SK-N-SH (cell line): ENCODE measurements at regions of chr12 and their contacts with region 1.

Region 1: DNA sequence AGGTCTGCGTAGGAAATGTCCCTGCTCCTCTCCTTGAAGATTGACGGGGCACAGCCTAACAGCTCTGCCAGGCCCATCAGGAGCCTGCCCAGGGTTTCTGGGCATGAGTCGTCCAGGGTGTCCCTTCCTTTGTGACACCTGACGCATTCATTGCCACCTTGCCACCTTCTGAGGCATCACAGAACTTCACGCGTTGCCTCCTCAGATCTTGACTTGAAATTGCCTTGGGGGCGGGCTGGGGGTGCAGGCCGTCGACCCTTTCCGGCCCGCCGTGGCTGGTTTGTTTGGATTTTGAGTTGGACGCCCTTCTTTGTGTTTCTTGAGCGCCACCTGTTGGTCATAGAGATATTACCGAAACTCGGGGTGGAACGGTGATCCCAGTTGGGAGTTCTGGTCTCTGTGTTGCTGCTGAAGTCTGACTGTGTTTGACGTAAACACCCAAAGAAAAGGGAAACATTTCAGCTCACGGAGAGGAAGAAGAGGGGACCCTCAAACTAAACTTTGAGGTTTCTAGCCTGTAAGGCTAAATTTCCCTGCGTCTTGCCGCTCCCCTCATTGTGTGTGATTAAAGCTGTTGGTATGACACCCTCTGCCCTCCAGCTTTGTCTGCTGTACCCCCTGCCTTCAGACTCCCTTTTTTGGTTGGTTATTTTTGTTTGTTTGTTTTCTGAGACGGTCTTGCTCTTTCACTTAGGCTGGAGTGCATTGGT is 44.6 kb downstream of the MLXIP start:
- DNase-seq: peak; percentile 86
- H3K4me3 ChIP-seq: no peak overlapping the region
- H3K27ac ChIP-seq: peak overlapping the region in 1 of 2 experiments; percentile 32; a peak in 1 of 4 replicates
- H3K4me1 ChIP-seq: peaks cover 2 to 4% of the 10 kb centered on the region in 2 experiments; a peak in 2 of 4 replicates
- H3K27me3 ChIP-seq: no peaks in the 10 kb centered on the region
- CTCF ChIP-seq: peak; percentile 78
- EP300 ChIP-seq: no peak
- RAD21 ChIP-seq: peak; percentile 89

Region 2: GRCh38 chr12:121903202-121903601 is 220.0 kb before region 1 on chr12:
- CTCF ChIA-PET with region 1: no interaction called
- POLR2A ChIA-PET with region 1: no interaction called
- DNase-seq: no peak
- H3K4me3 ChIP-seq: no peak overlapping the region
- H3K27ac ChIP-seq: no peak overlapping the region
- H3K4me1 ChIP-seq: no peaks in the 10 kb centered on the region
- H3K27me3 ChIP-seq: no peaks in the 10 kb centered on the region
- CTCF ChIP-seq: no peak
- EP300 ChIP-seq: no peak
- RAD21 ChIP-seq: no peak

Region 3: GRCh38 chr12:122051231-122051876 is 71.9 kb before region 1 on chr12:
- CTCF ChIA-PET with region 1: interaction called, 157 read pairs
- POLR2A ChIA-PET with region 1: interaction called, 5 read pairs
- DNase-seq: no peak
- H3K4me3 ChIP-seq: no peak overlapping the region
- H3K27ac ChIP-seq: peak overlapping the region in 1 of 2 experiments; percentile 24; a peak in 1 of 4 replicates
- H3K4me1 ChIP-seq: peaks cover 3% of the 10 kb centered on the region in 2 experiments; a peak in 1 of 4 replicates
- H3K27me3 ChIP-seq: no peaks in the 10 kb centered on the region
- CTCF ChIP-seq: no peak
- EP300 ChIP-seq: no peak
- RAD21 ChIP-seq: no peak

Region 4: DNA sequence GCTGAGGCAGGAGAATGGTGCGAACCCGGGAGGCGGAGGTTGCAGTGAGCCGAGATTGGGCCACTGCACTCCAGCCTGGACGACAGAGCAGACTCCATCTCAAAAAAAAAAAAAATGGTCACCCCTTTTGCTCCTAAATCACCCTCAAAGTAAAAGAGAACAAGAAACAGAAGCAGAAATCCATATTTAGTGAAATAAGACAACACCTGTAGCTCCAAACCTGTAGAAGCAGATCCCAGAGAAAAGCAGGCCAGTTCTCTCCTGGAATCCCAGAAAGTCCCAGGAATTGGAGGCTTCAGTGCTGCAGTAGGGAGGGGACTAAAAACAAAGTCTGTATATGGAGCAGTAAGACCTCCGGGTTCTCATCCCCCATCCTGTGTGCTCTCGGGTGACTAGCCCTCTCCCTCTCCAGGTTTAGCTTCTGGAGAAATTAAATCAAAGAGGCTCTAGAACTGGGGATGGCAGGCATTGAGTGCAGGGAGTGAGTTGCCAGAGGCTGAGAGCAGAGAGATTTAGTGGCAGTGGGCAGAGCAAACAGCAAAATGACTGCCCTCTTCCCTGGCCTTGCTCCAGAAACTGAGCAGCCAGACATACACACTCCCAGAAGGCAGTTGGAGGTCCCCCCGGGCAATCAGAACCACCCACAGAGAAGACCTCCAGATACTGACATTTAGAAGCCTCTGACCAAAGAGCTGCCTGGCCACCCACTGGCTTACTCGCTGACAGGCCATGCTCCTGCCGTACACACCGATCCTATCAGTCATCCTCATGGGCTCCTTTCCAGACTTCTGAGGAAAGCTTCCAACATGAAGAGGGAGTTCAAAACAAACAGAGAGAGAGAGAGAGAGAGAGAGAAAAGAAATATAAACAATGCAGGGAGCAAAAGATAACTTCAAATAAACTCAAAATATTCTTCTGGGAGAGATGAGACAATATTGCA is 50.9 kb before region 1 on chr12:
- CTCF ChIA-PET with region 1: interaction called, 11 read pairs
- POLR2A ChIA-PET with region 1: no interaction called
- DNase-seq: peak; percentile 83
- H3K4me3 ChIP-seq: peak overlapping the region in 1 of 2 experiments; percentile 24; a peak in 2 of 4 replicates
- H3K27ac ChIP-seq: peak overlapping the region; percentile 72 to 81
- H3K4me1 ChIP-seq: peaks cover 9 to 13% of the 10 kb centered on the region in 2 experiments; a peak in 3 of 4 replicates
- H3K27me3 ChIP-seq: no peaks in the 10 kb centered on the region
- CTCF ChIP-seq: no peak
- EP300 ChIP-seq: peak in 1 of 2 experiments; percentile 52; a peak in 2 of 4 replicates
- RAD21 ChIP-seq: peak; percentile 24; the same call in 1 of the 2 replicates

Region 5: GRCh38 chr12:122107261-122107660 is 15.9 kb before region 1 on chr12:
- CTCF ChIA-PET with region 1: interaction called, 32 read pairs
- POLR2A ChIA-PET with region 1: no interaction called
- DNase-seq: no peak
- H3K4me3 ChIP-seq: no peak overlapping the region
- H3K27ac ChIP-seq: peak overlapping the region in 1 of 2 experiments; percentile 83; a peak in 2 of 4 replicates
- H3K4me1 ChIP-seq: peaks cover 2 to 33% of the 10 kb centered on the region in 2 experiments; a peak in 3 of 4 replicates
- H3K27me3 ChIP-seq: no peaks in the 10 kb centered on the region
- CTCF ChIP-seq: no peak
- EP300 ChIP-seq: no peak
- RAD21 ChIP-seq: no peak

Region 6: DNA sequence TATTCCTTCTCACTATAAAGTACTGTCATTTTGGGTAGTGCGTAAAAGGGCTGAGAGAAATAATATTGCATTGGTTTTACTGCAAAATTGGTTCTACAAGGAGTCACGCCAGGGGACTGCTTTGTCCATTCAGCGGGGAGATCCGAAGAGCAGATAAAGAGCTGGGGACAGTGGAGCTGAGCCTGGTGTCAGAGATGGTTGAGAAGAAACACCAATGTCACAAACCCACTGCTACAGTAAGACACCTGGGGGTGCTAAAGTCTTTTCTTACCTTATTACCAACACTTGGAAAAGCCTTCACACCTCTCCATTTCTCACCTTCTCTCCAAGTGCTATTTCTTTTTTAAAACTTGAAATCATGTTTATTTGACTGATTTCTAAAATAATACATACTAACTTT is 36.7 kb after region 1 on chr12:
- CTCF ChIA-PET with region 1: interaction called, 12 read pairs
- POLR2A ChIA-PET with region 1: no interaction called
- DNase-seq: peak; percentile 27
- H3K4me3 ChIP-seq: no peak overlapping the region
- H3K27ac ChIP-seq: no peak overlapping the region
- H3K4me1 ChIP-seq: peaks cover 0 to 3% of the 10 kb centered on the region in 2 experiments; a peak in 1 of 4 replicates
- H3K27me3 ChIP-seq: no peaks in the 10 kb centered on the region
- CTCF ChIP-seq: no peak
- EP300 ChIP-seq: no peak
- RAD21 ChIP-seq: peak; percentile 49

Region 7: DNA sequence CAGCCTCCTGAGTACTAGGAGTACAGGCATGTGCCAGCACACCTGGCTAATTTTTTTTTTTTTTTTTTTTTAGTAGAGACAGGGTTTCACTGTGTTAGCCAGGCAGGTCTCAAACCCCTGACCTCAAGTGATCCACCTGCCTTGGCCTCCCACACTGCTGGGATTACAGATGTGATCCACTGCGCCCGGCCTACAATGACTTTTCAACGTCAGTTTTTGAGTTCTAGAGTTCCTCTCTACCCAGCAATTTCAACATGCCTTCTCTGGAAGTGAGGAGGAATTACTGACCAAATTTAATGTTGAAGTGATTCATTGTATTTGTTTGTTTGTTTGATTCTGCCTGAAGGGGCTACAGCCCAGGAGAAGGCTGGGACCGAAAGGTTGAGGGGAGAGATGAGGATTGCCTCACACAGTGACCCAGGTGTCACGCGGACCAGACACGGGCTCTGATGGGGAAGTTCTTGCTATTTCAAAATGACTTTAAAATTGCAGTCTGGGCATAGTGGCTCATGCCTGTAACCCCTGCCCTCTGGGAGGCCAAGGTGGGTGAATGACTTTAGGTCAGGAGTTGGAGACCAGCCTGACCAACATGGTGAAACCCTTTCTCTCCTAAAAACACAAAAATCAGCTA is 620.8 kb after region 1 on chr12:
- CTCF ChIA-PET with region 1: no interaction called
- POLR2A ChIA-PET with region 1: no interaction called
- DNase-seq: no peak
- H3K4me3 ChIP-seq: no peak overlapping the region
- H3K27ac ChIP-seq: no peak overlapping the region
- H3K4me1 ChIP-seq: no peaks in the 10 kb centered on the region
- H3K27me3 ChIP-seq: no peaks in the 10 kb centered on the region
- CTCF ChIP-seq: no peak
- EP300 ChIP-seq: no peak
- RAD21 ChIP-seq: no peak